Thyroid gland (tissue), 4 donors: ENCODE measurements at regions of chr15 and their contacts with region 1.

Region 1: GRCh38 chr15:63998489-63998888 is 47.8 kb downstream of the DAPK2 start:
- DNase-seq: no peak
- H3K4me3 ChIP-seq: no peak overlapping the region
- H3K27ac ChIP-seq: peak overlapping the region; percentile 12 to 67 (median 38)
- H3K4me1 ChIP-seq: peaks cover 35 to 40% of the 10 kb centered on the region in 2 donors
- H3K27me3 ChIP-seq: no peaks in the 10 kb centered on the region
- CTCF ChIP-seq: no peak
- POLR2A ChIP-seq: no peak

Region 2: GRCh38 chr15:63945007-63945788 is 53.3 kb before region 1 on chr15:
- intact Hi-C with region 1: loop called (anchors 10 kb)
- DNase-seq: peak; percentile 70 to 80
- H3K4me3 ChIP-seq: no peak overlapping the region
- H3K27ac ChIP-seq: peak overlapping the region; percentile 69 to 98 (median 90)
- H3K4me1 ChIP-seq: peaks cover 39 to 63% of the 10 kb centered on the region in 2 donors
- H3K27me3 ChIP-seq: no peaks in the 10 kb centered on the region
- CTCF ChIP-seq: peak; percentile 69 to 95 (median 80)
- POLR2A ChIP-seq: no peak

Region 3: DNA sequence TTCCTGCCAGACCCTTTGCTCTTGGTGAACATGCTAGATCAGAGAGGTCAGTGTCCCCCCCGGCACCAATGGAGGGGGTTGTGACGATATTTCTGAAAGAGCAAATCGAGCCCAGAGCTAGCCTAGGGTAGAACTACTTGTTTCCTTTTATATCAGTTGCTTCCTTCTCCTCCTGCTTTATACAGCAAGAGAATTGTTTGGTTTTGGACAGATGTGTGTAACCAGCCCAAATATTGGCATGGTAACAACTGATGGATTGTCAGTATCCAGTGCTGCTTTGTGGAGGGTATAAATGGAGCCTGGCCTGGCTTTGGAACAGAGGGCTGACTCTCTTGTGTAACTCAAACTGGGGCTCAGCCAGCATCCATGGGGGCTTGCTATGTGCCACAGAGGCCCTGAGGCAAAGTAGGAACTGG is 124.5 kb after region 1 on chr15:
- intact Hi-C with region 1: no loop called
- DNase-seq: no peak
- H3K4me3 ChIP-seq: no peak overlapping the region
- H3K27ac ChIP-seq: peak overlapping the region; percentile 43 to 61 (median 60)
- H3K4me1 ChIP-seq: peaks cover 25 to 30% of the 10 kb centered on the region in 2 donors
- H3K27me3 ChIP-seq: no peaks in the 10 kb centered on the region
- CTCF ChIP-seq: no peak
- POLR2A ChIP-seq: no peak